Activated CD4-positive, alpha-beta T cell treated with anti-CD3 and anti-CD28 coated beads for 36 hours (primary cell): ENCODE measurements at regions of chr7 and their contacts with region 1.

Region 1: DNA sequence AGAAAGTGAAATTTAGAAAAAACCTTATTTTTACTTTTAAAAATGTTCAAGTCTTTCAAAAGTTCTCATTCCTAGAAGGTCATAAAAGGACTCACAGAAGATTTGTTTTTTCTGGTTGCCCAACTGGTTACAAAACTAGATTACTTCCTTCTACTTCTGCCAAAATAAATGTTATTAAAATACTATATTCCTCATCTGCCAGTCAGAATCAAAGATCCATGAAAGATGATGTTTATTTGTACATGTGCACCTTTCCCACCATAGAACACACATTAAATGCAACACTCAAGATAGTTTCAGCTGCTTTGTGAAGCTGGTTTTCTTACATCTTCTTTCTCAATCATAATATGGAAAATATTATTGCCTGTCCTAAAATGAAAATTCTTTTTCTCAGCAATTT is 465.4 kb downstream of the ETV1 start:
- DNase-seq: no peak
- ATAC-seq: no peak
- H3K4me3 Mint-ChIP-seq: no peak overlapping the region
- H3K27ac Mint-ChIP-seq: no peak overlapping the region
- H3K4me1 Mint-ChIP-seq: no peaks in the 10 kb centered on the region
- H3K27me3 Mint-ChIP-seq: no peaks in the 10 kb centered on the region

Region 2: DNA sequence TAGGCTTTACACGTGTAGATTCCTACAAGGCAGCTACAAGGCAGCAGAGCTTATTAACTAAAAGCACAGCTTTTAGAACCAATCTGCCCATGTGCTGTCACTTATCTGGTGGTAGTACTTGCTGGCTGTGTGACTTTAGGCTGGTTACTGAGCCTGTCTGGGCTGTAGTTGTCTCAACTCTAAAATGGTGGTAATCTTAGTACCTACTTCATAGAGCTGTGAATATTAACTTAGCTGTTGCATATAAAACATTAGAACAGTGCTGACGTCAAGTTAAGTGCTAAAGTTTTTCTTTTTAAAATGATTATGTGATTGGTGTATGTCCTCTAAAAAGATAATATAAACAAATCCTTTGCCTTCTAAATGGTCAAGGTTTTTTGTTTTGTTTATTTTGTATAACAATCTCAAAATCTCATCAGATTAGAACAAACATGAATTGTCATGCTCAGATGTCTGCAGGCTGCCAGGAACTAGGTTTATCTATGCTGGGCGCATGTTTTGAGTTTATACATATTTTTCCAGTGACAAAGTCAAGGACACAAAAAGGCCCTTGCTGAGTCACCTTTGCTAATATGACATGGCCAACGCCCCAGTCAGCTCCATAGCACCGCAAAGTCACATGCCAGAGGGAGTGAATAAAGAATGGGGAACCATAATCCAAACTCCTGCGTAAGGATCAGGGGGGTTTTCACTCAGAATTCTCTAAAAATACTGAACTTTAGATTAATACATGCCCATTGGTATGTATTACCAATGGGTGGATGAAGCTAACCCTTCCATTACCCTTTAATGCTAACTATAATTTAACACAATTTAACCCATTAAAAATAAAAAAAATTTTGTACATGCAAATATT is 876.5 kb before region 1 on chr7:
- CTCF ChIA-PET with region 1: no interaction called
- POLR2A ChIA-PET with region 1: no interaction called
- intact Hi-C with region 1: no loop called
- DNase-seq: no peak
- ATAC-seq: no peak
- H3K4me3 Mint-ChIP-seq: no peak overlapping the region
- H3K27ac Mint-ChIP-seq: no peak overlapping the region
- H3K4me1 Mint-ChIP-seq: no peaks in the 10 kb centered on the region
- H3K27me3 Mint-ChIP-seq: no peaks in the 10 kb centered on the region

Region 3: GRCh38 chr7:13433946-13434345 is 90.1 kb before region 1 on chr7:
- CTCF ChIA-PET with region 1: no interaction called
- POLR2A ChIA-PET with region 1: no interaction called
- intact Hi-C with region 1: no loop called
- DNase-seq: no peak
- ATAC-seq: no peak
- H3K4me3 Mint-ChIP-seq: no peak overlapping the region
- H3K27ac Mint-ChIP-seq: no peak overlapping the region
- H3K4me1 Mint-ChIP-seq: no peaks in the 10 kb centered on the region
- H3K27me3 Mint-ChIP-seq: no peaks in the 10 kb centered on the region

Region 4: DNA sequence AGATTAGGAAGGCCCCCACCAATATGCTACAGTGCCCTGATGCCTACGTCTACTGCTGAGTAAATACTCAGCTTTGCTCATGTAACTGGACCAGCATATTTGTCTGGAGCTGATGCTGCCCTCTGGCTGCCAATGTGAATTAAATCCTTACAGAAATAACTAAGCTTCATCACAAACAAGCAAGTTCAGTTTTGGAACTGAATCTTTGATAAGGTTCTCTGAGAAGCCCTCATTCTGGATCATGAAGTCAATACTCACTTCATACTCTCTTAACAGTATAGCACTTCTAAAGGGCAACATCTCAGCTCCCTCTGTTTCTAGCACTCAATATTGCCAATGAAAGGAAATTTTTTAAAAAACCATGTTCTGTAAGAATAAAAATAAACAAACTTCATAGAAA is 218.7 kb after region 1 on chr7:
- CTCF ChIA-PET with region 1: no interaction called
- POLR2A ChIA-PET with region 1: no interaction called
- intact Hi-C with region 1: loop called in 1 of 2 experiments (anchors 2 kb)
- DNase-seq: peak; percentile 24
- ATAC-seq: no peak
- H3K4me3 Mint-ChIP-seq: no peak overlapping the region
- H3K27ac Mint-ChIP-seq: no peak overlapping the region
- H3K4me1 Mint-ChIP-seq: no peaks in the 10 kb centered on the region
- H3K27me3 Mint-ChIP-seq: no peaks in the 10 kb centered on the region

Region 5: GRCh38 chr7:14691597-14692203 is 1167.6 kb after region 1 on chr7:
- CTCF ChIA-PET with region 1: no interaction called
- POLR2A ChIA-PET with region 1: no interaction called
- intact Hi-C with region 1: loop called in 1 of 2 experiments (anchors 10 kb)
- DNase-seq: peak; percentile 62
- ATAC-seq: no peak
- H3K4me3 Mint-ChIP-seq: no peak overlapping the region
- H3K27ac Mint-ChIP-seq: no peak overlapping the region
- H3K4me1 Mint-ChIP-seq: no peaks in the 10 kb centered on the region
- H3K27me3 Mint-ChIP-seq: no peaks in the 10 kb centered on the region